Dorsolateral prefrontal cortex (tissue), 120 donors: ENCODE measurements at regions of chrX and their contacts with region 1.

Region 1: DNA sequence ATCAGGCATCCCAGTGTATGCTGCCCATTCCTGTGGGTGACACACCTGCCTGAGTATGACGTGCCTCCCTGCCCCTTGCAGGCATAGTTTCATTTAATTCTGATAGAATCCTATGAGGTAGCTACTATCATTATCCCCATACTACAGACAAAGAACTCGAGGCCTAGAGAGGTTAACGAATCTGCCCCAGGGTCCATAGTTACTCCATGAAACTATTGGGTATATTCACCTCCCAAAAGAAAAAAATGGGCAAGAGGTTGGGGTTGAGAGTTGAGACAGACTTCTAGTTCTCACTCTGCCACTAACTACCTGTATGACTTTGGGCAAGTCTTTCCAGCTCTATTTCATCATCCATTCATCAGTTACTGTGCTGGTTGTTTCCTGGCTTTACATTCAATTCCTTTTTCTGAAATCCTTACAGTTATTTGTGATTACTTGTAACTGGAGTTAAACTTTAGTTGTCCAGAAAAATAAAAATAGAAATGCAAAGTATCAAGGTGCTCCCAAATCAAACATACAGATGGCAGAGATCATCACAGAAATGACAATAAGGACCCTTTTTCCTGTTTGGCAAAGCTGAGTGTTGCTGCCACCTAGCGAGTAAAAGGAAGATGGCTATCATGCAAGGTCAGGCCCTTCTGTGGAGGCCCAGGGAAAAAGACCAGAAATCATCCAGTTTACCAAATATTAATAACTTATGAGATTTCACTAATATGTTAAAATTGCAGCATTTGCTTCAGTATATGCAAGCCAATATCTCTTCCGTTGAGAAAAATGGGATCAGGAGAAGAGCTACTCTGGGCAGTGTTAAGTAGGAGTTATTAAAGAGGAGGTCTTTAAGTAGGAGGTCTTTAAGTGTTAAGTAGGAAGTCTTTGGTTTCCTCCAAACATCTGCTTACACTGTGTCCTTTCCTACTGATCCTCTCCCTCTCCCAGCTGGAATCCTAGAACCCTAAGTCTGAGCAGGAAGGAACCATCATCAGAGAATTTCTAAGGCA is 17.1 kb upstream of the MAP7D3 start:
- DNase-seq: peak in 2 of 10 donors; percentile 34 to 45
- H3K4me3 ChIP-seq: no peak overlapping the region
- H3K27ac ChIP-seq: no peak overlapping the region
- H3K27me3 ChIP-seq: peaks cover 0 to 54% (median 6%) of the 10 kb centered on the region in 45 donors
- CTCF ChIP-seq: peak; percentile 48 to 85 (median 71)

Region 2: GRCh38 chrX:136168929-136169735 is 99.2 kb before region 1 on chrX:
- intact Hi-C with region 1: loop called in 1 of 2 experiments (anchors 5 kb)
- DNase-seq: peak in 4 of 10 donors; percentile 30 to 52 (median 39)
- H3K4me3 ChIP-seq: peak overlapping the region in 6 of 59 donors; percentile 4 to 24 (median 13)
- H3K27ac ChIP-seq: peak overlapping the region in 46 of 59 donors; percentile 12 to 82 (median 44)
- H3K27me3 ChIP-seq: peaks cover 0 to 63% (median 12%) of the 10 kb centered on the region in 45 donors
- CTCF ChIP-seq: no peak

Region 3: GRCh38 chrX:136214551-136214950 is 53.8 kb before region 1 on chrX:
- intact Hi-C with region 1: no loop called
- DNase-seq: no peak
- H3K4me3 ChIP-seq: no peak overlapping the region
- H3K27ac ChIP-seq: no peak overlapping the region
- H3K27me3 ChIP-seq: peaks cover 0 to 63% (median 14%) of the 10 kb centered on the region in 45 donors
- CTCF ChIP-seq: no peak

Region 4: DNA sequence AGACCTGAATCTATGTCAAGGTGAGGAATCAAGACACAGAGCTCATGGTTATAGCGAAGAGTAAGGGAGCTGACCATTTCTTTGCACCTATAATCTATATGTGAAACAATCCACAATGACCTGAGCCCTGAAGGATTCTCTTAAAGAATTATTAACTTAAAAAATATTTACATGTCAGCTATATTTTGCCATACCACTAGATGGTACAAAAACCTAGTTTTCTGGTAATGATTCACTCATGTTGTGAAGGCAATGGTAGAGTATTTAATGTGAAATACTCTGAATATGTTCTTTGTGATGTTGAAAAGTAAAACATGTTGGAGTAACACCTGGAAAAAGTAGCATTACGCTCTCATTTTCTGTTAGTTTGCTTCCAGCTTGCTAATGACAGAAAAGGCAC is 303.7 kb after region 1 on chrX:
- intact Hi-C with region 1: no loop called
- DNase-seq: no peak
- H3K4me3 ChIP-seq: no peak overlapping the region
- H3K27ac ChIP-seq: no peak overlapping the region
- H3K27me3 ChIP-seq: peaks cover 0 to 70% (median 10%) of the 10 kb centered on the region in 45 donors
- CTCF ChIP-seq: no peak